Activated CD8-positive, alpha-beta T cell treated with anti-CD3 and anti-CD28 coated beads for 36 hours (primary cell): ENCODE measurements at regions of chr6 and their contacts with region 1.

Region 1: DNA sequence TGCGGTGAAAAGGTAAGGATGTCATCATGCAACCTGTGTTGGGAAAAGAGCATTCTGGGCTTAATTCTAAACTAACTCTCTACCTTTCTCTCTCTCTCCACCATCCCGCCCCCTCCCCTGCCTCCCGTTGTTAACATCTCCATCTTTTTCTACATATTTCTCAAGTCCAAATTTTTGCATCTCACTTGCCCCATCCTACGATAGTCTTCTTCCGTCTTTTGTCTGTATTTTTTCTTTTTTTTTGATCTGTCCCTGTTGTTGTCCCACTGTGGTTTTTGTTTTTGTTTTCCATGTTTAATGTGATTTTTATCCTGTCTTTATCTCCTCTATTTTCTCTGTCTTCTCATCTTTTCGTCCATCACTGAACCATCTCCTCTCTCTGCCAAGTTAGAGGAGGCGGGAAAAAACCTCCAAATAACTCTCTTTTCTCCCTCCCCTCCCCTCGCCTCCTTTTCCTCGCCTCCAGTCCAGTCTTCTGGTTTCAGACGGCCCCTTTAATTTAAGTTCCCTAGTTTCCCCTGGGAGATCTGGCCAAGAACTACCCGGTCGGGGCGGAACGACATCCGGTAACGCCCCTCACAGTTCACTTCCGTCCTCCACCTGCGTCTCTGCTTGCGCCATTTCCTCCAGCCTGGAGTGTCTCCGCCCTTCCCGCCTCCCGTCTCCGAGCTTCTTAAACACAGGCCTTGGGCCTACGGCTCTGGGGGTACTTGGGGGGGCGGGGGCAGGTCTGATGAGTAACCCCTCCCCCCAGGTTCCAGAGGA is at the start of gene NFKBIL1:
- DNase-seq: peak; percentile 97
- ATAC-seq: peak; percentile 85
- H3K4me3 Mint-ChIP-seq: peak within 1 kb of the TSS; percentile 80
- H3K27ac Mint-ChIP-seq: peak within 1 kb of the TSS; percentile 80
- H3K4me1 Mint-ChIP-seq: peaks cover 40% of the 10 kb centered on the region
- H3K27me3 Mint-ChIP-seq: no peaks in the 10 kb centered on the region
- CTCF ChIP-seq: peak; percentile 64
- total RNA-seq, gene NFKBIL1: 11.3 to 13.0 TPM

Region 2: DNA sequence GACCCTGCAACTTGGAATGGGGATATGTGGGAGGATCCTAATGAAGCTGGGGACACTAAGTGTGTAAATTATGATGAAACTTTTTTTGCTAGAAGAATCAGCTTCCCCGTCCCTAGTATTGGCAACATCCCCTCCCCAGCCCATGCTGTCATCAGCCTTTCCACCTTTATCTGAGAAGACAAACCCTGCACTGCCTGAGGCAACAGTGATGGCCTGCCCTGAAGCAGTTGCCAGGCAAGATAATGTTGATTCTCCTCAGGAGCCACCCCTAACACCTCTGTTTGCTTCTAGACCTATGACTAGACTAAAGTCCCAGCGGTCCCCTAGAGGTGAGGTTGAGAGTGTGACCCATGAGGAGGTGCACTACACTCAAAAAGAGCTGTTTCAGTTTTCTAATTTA is 116.7 kb before region 1 on chr6:
- CTCF ChIA-PET with region 1: no interaction called
- POLR2A ChIA-PET with region 1: no interaction called
- intact Hi-C with region 1: no loop called
- DNase-seq: no peak
- ATAC-seq: no peak
- H3K4me3 Mint-ChIP-seq: no peak overlapping the region
- H3K27ac Mint-ChIP-seq: no peak overlapping the region
- H3K4me1 Mint-ChIP-seq: no peaks in the 10 kb centered on the region
- H3K27me3 Mint-ChIP-seq: peaks cover 2% of the 10 kb centered on the region
- CTCF ChIP-seq: no peak

Region 3: GRCh38 chr6:31453259-31453658 is 93.9 kb before region 1 on chr6:
- CTCF ChIA-PET with region 1: no interaction called
- POLR2A ChIA-PET with region 1: no interaction called
- intact Hi-C with region 1: no loop called
- DNase-seq: no peak
- ATAC-seq: no peak
- H3K4me3 Mint-ChIP-seq: no peak overlapping the region
- H3K27ac Mint-ChIP-seq: no peak overlapping the region
- H3K4me1 Mint-ChIP-seq: no peaks in the 10 kb centered on the region
- H3K27me3 Mint-ChIP-seq: peaks cover 10% of the 10 kb centered on the region
- CTCF ChIP-seq: no peak

Region 4: GRCh38 chr6:31493875-31494694 is 53.1 kb before region 1 on chr6:
- CTCF ChIA-PET with region 1: interaction called, 10 read pairs
- POLR2A ChIA-PET with region 1: interaction called, 35 read pairs
- intact Hi-C with region 1: no loop called
- DNase-seq: peak; percentile 91
- ATAC-seq: peak; percentile 50
- H3K4me3 Mint-ChIP-seq: peak overlapping the region; percentile 89
- H3K27ac Mint-ChIP-seq: peak overlapping the region; percentile 92
- H3K4me1 Mint-ChIP-seq: peaks cover 36% of the 10 kb centered on the region
- H3K27me3 Mint-ChIP-seq: no peaks in the 10 kb centered on the region
- CTCF ChIP-seq: peak; percentile 91

Region 5: GRCh38 chr6:31568537-31568961 is 21.4 kb after region 1 on chr6:
- CTCF ChIA-PET with region 1: interaction called, 2,542 read pairs
- POLR2A ChIA-PET with region 1: interaction called, 97 read pairs
- intact Hi-C with region 1: no loop called
- DNase-seq: peak; percentile 88
- ATAC-seq: peak; percentile 53
- H3K4me3 Mint-ChIP-seq: peak overlapping the region; percentile 54
- H3K27ac Mint-ChIP-seq: peak overlapping the region; percentile 91
- H3K4me1 Mint-ChIP-seq: peaks cover 70% of the 10 kb centered on the region
- H3K27me3 Mint-ChIP-seq: no peaks in the 10 kb centered on the region
- CTCF ChIP-seq: no peak

Region 6: GRCh38 chr6:31580807-31581433 is 33.8 kb after region 1 on chr6:
- CTCF ChIA-PET with region 1: interaction called, 2,542 read pairs
- POLR2A ChIA-PET with region 1: interaction called, 97 read pairs
- intact Hi-C with region 1: loop called (anchors 5 kb)
- DNase-seq: peak; percentile 92
- ATAC-seq: peak; percentile 55
- H3K4me3 Mint-ChIP-seq: peak overlapping the region; percentile 96
- H3K27ac Mint-ChIP-seq: peak overlapping the region; percentile 98
- H3K4me1 Mint-ChIP-seq: peaks cover 47% of the 10 kb centered on the region
- H3K27me3 Mint-ChIP-seq: no peaks in the 10 kb centered on the region
- CTCF ChIP-seq: peak; percentile 97

Region 7: GRCh38 chr6:31614684-31615578 is 67.8 kb after region 1 on chr6 and contains the start of gene AIF1:
- CTCF ChIA-PET with region 1: interaction called, 2,542 read pairs
- POLR2A ChIA-PET with region 1: interaction called, 5 read pairs
- intact Hi-C with region 1: no loop called
- DNase-seq: no peak
- ATAC-seq: no peak
- H3K4me3 Mint-ChIP-seq: peak within 1 kb of the TSS; percentile 95
- H3K27ac Mint-ChIP-seq: peak within 1 kb of the TSS; percentile 96
- H3K4me1 Mint-ChIP-seq: peaks cover 43% of the 10 kb centered on the region
- H3K27me3 Mint-ChIP-seq: no peaks in the 10 kb centered on the region
- CTCF ChIP-seq: no peak
- total RNA-seq, gene AIF1: 240 to 253 TPM